Breast epithelium (tissue), 4 donors: ENCODE measurements at regions of chr9 and their contacts with region 1.

Region 1: GRCh38 chr9:27548055-27548741 is 18.6 kb upstream of the MOB3B start:
- DNase-seq: no peak
- H3K4me3 ChIP-seq: no peak overlapping the region
- H3K27ac ChIP-seq: peak overlapping the region in 1 of 2 donors; percentile 30
- H3K4me1 ChIP-seq: peaks cover 0 to 9% of the 10 kb centered on the region in 2 donors
- H3K27me3 ChIP-seq: no peaks in the 10 kb centered on the region
- CTCF ChIP-seq: peak in 2 of 3 donors; percentile 49 to 56
- POLR2A ChIP-seq: no peak

Region 2: DNA sequence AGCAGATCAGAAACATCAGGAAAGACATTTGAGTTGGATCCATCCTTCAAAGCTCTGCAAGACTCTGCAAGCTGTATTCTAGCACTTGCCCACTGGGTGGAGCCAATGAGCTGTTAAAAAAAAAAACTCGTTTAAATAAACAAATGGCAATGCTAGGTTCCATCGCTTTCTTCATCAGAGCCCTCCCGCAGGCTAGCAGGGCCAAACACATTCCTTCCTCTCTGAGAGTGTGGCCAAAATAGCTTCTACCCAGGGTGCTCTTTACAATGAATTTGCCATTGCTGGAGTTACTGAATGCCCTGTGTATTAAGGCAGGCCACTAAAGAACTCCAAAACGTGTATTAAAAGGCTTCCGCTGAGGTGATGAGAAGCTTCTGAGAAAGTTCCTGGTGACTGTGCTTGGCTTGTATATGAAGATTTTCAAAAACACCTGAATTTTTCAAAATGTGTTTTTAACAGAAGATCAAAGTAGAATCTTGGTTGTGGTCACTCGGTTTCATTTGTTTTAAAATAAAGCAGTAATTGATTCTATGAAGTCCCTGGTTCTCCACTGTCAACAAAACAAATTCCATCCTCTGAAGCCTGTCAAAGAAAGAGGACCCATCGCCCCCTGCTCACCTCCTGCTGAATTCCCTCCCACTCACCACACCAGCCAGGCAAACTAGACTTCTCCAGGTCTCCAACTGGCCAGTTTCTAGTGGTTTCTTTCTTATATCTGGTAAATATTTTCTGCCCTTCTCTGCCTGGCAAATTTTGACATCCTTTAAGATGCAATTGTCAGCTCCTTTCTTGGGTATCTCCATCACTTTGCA is 214.8 kb before region 1 on chr9:
- intact Hi-C with region 1: loop called (anchors 10 kb)
- DNase-seq: peak in 1 of 2 donors; percentile 65
- H3K4me3 ChIP-seq: no peak overlapping the region
- H3K27ac ChIP-seq: peak overlapping the region; percentile 0 to 8
- H3K4me1 ChIP-seq: peaks cover 7 to 13% of the 10 kb centered on the region in 2 donors
- H3K27me3 ChIP-seq: no peaks in the 10 kb centered on the region
- CTCF ChIP-seq: peak; percentile 69 to 92 (median 82)
- POLR2A ChIP-seq: no peak

Region 3: DNA sequence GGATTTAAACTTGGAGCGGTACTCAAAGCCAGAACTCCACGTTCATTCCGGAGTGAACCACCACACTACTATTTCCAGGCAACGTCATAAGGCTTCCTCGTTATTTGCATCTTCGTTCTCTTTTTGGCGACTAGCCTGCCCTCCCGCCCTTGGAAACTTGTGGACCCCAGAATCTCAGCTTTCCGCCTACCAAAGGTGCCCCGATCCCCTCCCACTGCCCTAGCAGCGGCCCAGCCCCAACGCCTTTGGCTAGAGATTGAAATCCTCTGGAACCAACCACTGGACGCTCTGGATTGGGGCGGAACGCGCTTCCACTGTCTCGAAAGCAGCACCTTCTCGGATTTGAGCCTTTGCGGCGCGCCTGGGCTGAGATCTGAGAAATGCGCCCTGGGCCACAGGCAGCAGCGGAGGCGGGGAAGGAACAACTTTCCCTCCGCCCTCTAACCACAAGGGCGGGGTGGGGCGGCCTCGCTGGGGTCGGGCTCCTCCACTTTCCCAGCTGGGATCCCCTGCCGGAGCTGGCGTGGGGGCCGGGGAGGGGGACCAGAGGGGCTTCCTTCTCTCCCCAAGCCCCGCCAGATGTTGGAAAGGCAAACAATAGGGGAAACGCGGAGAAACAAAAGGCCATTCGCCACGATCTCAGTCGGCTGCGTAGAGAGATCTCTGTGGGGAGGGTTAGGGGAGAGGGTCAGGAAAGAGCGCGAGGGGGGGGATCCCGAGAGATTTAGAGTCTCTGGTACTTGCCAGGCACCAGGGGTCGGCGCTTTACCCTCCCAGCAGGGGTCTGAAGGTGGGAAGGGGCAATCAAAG is 19.9 kb before region 1 on chr9:
- intact Hi-C with region 1: no loop called
- DNase-seq: peak; percentile 71 to 90
- H3K4me3 ChIP-seq: peak overlapping the region; percentile 84 to 94 (median 93)
- H3K27ac ChIP-seq: peak overlapping the region; percentile 97 to 99
- H3K4me1 ChIP-seq: peaks cover 0 to 4% of the 10 kb centered on the region in 2 donors
- H3K27me3 ChIP-seq: no peaks in the 10 kb centered on the region
- CTCF ChIP-seq: no peak
- POLR2A ChIP-seq: peak; percentile 75